Psoas muscle (tissue), 8 donors: ENCODE measurements at regions of chr1 and their contacts with region 1.

Region 1: DNA sequence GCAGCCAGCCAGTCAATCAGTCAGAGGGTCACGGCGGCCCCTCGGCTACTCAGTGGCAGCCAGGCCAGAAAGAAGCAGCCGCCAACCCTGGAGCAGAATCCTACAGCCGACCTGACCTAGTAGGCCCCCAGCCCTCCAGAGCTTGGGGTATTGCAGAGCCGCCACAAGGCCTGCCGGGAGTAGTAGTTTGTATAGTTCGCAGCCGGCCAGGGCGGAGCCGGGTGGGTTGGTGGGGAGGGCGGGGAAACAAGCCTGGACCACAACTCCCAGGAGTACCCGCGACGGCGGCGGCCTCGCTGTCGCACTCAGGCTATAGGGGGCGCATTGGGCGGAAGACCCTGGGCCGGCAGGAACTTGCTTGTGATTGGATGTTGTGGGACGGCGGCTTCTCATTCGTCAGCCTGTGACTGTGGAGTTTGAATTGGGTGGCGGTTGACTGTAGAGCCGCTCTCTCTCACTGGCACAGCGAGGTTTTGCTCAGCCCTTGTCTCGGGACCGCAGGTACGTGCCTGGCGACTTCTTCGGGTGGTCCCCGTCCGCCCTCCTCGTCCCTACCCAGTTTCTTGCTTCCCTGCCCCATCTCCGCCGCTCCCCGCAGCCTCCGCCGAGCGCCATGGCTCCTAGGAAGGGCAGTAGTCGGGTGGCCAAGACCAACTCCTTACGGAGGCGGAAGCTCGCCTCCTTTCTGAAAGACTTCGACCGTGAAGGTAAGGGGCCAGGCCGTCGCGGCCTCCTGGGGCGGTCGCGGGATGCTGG is at the start of gene CDCA8:
- DNase-seq: peak; percentile 98 to 99
- ATAC-seq: peak; percentile 93 to 95 (median 93)
- H3K4me3 ChIP-seq: peak within 1 kb of the TSS; percentile 85
- H3K27ac ChIP-seq: peak within 1 kb of the TSS; percentile 84
- H3K4me1 ChIP-seq: peaks cover 22% of the 10 kb centered on the region
- H3K27me3 ChIP-seq: no peaks in the 10 kb centered on the region
- CTCF ChIP-seq: peak; percentile 50
- total RNA-seq, gene CDCA8: 0.10 to 0.67 (median 0.14) TPM

Region 2: DNA sequence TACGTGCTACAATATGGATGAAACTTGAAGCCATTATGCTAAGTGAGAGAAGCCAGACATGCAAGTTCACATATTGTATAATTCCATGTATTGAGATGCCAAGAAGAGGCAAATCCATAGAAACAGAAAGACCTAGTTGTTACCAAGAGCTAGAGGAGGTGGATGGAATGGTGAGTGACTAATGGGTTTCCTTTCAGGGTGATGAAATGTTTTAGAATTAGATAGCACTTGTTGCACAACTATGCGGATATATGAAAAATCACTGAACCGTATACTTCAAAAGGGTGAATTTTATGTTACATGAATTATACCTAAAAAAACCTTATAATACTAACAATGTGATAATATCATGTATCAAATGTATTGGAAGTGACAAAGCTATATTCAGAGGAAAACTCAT is 54.5 kb after region 1 on chr1:
- intact Hi-C with region 1: no loop called
- DNase-seq: no peak
- ATAC-seq: no peak
- H3K4me3 ChIP-seq: no peak overlapping the region
- H3K27ac ChIP-seq: no peak overlapping the region
- H3K4me1 ChIP-seq: no peaks in the 10 kb centered on the region
- H3K27me3 ChIP-seq: peaks cover 0 to 26% (median 3%) of the 10 kb centered on the region in 3 donors
- CTCF ChIP-seq: no peak

Region 3: DNA sequence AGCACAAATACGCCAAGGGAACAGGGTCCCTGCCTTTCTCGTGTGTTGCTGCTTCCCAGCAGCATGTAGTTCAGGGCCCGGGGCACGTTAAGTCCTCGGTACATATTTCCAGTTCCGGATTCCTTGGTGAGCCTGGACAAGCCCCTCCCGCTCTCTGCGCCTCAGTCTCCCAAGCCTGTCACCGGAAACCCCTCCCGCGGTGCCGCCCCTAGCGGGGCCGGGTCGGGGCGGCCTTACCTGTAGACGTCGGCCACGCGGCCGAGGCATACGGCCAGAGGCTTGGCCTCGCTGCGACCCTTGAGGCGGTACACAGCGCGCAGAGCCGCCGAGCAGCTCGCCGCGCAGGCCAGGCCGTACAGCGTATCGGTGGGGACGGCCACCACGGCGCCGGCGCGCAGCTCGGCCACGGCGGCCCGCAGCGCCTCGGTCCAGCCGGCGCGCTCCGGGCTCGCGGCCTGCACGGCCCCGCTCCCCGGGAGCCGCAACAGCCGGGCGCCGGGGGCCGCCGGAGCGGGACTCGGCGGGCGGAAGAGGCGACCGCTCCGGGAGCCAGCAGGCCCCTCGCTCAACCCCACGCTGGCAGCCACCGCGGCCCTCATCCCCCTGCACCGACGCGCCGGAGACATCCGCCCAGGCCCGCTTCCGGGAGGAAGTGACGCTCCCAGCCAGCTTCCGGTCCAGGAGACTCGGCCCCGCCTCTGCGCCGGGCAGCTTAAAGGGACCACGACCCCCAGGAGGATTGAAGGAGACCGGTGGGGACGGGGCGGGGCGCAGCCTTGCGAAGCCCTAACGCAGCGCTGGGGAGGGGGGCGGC is 115.5 kb after region 1 on chr1 and contains the starts of genes C1orf122 and YRDC:
- intact Hi-C with region 1: loop called (anchors 5 to 10 kb)
- DNase-seq: peak; percentile 95 to 97
- ATAC-seq: peak; percentile 95 to 96 (median 95)
- H3K4me3 ChIP-seq: peak within 1 kb of the TSS; percentile 88
- H3K27ac ChIP-seq: peak within 1 kb of the TSS; percentile 93
- H3K4me1 ChIP-seq: peaks cover 19% of the 10 kb centered on the region
- H3K27me3 ChIP-seq: no peaks in the 10 kb centered on the region
- CTCF ChIP-seq: no peak
- total RNA-seq, gene C1orf122: 26.6 to 32.1 (median 28.1) TPM
- total RNA-seq, gene YRDC: 3.4 to 12.5 (median 10.2) TPM